ENCODE measurements at regions of chr6 and their contacts with region 1.

Region 1: DNA sequence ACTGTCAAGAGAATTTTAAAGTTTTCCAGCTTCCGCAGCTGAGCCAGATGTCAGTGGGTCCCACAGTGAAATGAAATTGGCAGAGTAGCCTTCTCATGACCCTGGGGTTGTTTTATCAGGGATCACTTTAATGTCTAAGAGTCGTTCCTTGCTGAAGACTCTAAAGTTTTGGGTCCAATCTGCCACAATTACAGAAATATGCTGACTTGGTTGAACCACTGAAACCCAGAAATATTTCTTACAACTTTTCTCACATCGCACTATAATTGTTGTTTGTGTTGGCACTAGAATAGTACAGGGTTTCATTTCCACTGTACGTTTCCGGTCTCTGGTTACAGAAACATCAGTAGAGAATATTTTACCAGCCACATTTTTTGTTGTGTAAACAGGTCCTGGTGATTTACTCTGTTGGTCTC is 109.0 kb downstream of the HMGCLL1 start:
- DNase-seq: no peak
- ATAC-seq: peak; percentile 60

Region 2: DNA sequence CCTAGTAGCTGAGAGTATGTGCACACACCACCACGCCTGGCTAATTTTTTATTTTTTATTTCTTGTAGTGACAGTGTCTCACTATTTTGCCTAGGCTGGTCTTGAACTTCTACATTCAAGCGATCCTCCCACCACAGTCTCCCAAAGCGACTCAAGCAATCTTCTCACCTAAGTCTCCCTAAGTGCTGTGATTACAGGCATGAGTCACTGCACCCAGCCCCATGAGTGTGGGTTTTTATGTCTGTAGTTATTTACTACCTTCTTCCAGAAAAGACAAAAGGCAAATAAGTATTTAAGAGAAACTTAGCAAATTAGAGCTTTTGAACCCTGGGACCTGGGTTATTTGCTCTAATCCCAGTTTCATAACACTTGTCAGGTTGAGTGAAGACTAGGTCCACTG is 387.9 kb before region 1 on chr6:
- intact Hi-C with region 1: loop called (anchors 5 kb)
- DNase-seq: no peak
- ATAC-seq: no peak

Measured in sciatic nerve (tissue), 2 donors.